AG04449 (cell line): ENCODE measurements at regions of chr22 and their contacts with region 1.

Region 1: DNA sequence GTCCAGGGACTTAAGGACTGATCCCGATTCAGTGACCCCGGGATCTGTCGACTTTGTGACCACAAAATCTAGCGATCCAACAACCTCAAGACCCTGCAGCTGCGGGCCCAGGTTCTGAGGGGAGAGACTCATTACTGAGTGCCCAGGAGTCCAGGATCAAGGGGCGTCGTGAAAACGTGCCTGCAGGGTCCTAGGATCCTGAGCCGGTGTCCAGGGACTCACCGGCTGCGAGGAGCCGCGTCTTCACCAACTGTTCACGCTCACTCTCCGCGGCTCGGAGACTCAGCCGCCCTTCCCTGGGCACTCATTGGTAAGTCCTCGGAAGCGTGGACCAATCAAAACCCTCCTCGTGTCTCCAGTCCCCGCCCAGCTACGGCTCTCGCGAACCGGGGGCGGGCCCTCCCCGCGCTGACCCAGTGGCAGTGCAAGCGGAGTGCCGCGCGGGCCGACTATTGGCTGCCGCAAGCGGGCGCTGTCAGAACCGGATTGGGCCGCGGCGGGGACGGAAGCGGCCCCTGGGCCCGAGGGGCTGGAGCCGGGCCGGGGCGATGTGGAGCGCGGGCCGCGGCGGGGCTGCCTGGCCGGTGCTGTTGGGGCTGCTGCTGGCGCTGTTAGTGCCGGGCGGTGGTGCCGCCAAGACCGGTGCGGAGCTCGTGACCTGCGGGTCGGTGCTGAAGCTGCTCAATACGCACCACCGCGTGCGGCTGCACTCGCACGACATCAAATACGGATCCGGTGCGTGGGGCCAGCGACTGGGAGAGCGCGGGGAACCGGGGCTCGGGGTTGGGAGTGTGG is at the start of gene SDF2L1:
- DNase-seq: peak; percentile 91
- H3K4me3 ChIP-seq: peak within 1 kb of the TSS; percentile 74
- CTCF ChIP-seq: peak; percentile 21

Region 2: GRCh38 chr22:21579518-21580147 is 62.4 kb before region 1 on chr22:
- CTCF ChIA-PET with region 1: interaction called, 12 read pairs
- POLR2A ChIA-PET with region 1: no interaction called
- DNase-seq: no peak
- H3K4me3 ChIP-seq: no peak overlapping the region
- CTCF ChIP-seq: no peak

Region 3: GRCh38 chr22:21652010-21652546 is 10.1 kb after region 1 on chr22:
- CTCF ChIA-PET with region 1: interaction called, 39 read pairs
- POLR2A ChIA-PET with region 1: interaction called, 3 read pairs
- DNase-seq: no peak
- H3K4me3 ChIP-seq: peak overlapping the region; percentile 93
- CTCF ChIP-seq: no peak